A549 (cell line): ENCODE measurements at regions of chr9 and their contacts with region 1.

Region 1: GRCh38 chr9:130682490-130683121 is 11.0 kb upstream of the EXOSC2 start:
- DNase-seq: peak; percentile 89 to 91
- ATAC-seq: peak; percentile 71 to 87
- H3K4me3 ChIP-seq: peak overlapping the region; percentile 85
- H3K27ac ChIP-seq: peak overlapping the region; percentile 92; a peak in 5 of 6 replicates
- H3K4me1 ChIP-seq: peaks cover 6% of the 10 kb centered on the region; the same call in 2 of the 3 replicates
- CTCF ChIP-seq: peak; percentile 93
- EP300 ChIP-seq: no peak
- POLR2A ChIP-seq: no peak
- RAD21 ChIP-seq: peak; percentile 94 to 96

Region 2: GRCh38 chr9:130444565-130445221 is 237.9 kb before region 1 on chr9 and contains the start of gene ASS1:
- CTCF ChIA-PET with region 1: interaction called, 25 read pairs
- POLR2A ChIA-PET with region 1: no interaction called
- DNase-seq: peak in 1 of 2 experiments; percentile 68
- ATAC-seq: peak; percentile 70 to 83
- H3K4me3 ChIP-seq: peak within 1 kb of the TSS; percentile 77
- H3K27ac ChIP-seq: peak within 1 kb of the TSS; percentile 58 to 85; a peak in 5 of 6 replicates
- H3K4me1 ChIP-seq: peaks cover 31% of the 10 kb centered on the region
- CTCF ChIP-seq: no peak
- EP300 ChIP-seq: no peak
- POLR2A ChIP-seq: no peak
- RAD21 ChIP-seq: no peak
- polyA plus RNA-seq, gene ASS1: 32.5 and 36.9 TPM in 2 replicates

Region 3: GRCh38 chr9:130461218-130461630 is 221.4 kb before region 1 on chr9:
- CTCF ChIA-PET with region 1: interaction called, 453 read pairs
- POLR2A ChIA-PET with region 1: interaction called, 3 read pairs
- DNase-seq: peak; percentile 39 to 59
- ATAC-seq: peak; percentile 63 to 82
- H3K4me3 ChIP-seq: no peak overlapping the region
- H3K27ac ChIP-seq: no peak overlapping the region
- H3K4me1 ChIP-seq: no peaks in the 10 kb centered on the region
- CTCF ChIP-seq: peak; percentile 86
- EP300 ChIP-seq: no peak
- POLR2A ChIP-seq: no peak
- RAD21 ChIP-seq: peak; percentile 89 to 96

Region 4: DNA sequence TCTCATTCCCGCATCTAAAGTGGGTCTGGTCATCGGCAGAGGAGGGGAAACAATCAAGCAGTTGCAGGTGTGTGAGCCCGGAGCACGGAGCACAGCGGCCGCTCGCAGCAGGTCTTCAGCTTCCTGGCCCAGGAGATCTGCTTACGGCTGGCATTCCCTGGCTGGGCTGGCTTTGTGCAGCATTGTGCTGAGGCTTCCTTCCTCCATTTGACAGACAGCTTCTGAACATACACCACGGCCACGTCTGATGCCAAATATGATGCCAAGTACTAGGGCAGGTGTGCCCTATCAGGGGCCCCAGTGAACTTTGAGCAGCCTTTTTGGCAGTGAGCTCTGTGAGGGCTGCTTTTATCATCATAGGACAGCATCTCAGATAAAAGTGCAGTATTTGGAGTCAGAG is 66.2 kb before region 1 on chr9:
- CTCF ChIA-PET with region 1: interaction called, 11 read pairs
- POLR2A ChIA-PET with region 1: no interaction called
- DNase-seq: no peak
- ATAC-seq: no peak
- H3K4me3 ChIP-seq: no peak overlapping the region
- H3K27ac ChIP-seq: no peak overlapping the region
- H3K4me1 ChIP-seq: no peaks in the 10 kb centered on the region
- CTCF ChIP-seq: no peak
- EP300 ChIP-seq: no peak
- POLR2A ChIP-seq: no peak
- RAD21 ChIP-seq: no peak

Region 5: DNA sequence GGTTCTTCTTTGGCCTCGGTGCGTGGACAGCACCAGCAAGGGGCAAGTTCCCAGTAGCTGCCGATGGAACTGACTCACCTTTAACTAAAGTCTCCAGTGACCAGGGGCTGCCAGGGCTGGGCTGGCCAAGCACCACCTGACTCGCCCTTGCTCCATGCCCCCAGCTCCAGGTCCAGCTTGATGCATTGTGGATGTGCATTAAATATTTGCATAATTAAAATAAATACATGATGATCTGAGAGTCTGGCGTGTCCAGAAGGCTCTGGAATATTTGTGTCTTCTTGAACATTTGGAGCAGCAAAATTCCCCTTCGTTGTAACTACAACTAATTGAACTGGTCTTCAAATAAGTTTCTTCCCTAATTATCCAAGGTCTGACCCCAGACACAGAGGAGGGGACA is 27.7 kb before region 1 on chr9:
- CTCF ChIA-PET with region 1: interaction called, 18 read pairs
- POLR2A ChIA-PET with region 1: no interaction called
- DNase-seq: no peak
- ATAC-seq: no peak
- H3K4me3 ChIP-seq: no peak overlapping the region
- H3K27ac ChIP-seq: no peak overlapping the region
- H3K4me1 ChIP-seq: peaks cover 2% of the 10 kb centered on the region; the same call in 2 of the 3 replicates
- CTCF ChIP-seq: no peak
- EP300 ChIP-seq: no peak
- POLR2A ChIP-seq: no peak
- RAD21 ChIP-seq: no peak

Region 6: DNA sequence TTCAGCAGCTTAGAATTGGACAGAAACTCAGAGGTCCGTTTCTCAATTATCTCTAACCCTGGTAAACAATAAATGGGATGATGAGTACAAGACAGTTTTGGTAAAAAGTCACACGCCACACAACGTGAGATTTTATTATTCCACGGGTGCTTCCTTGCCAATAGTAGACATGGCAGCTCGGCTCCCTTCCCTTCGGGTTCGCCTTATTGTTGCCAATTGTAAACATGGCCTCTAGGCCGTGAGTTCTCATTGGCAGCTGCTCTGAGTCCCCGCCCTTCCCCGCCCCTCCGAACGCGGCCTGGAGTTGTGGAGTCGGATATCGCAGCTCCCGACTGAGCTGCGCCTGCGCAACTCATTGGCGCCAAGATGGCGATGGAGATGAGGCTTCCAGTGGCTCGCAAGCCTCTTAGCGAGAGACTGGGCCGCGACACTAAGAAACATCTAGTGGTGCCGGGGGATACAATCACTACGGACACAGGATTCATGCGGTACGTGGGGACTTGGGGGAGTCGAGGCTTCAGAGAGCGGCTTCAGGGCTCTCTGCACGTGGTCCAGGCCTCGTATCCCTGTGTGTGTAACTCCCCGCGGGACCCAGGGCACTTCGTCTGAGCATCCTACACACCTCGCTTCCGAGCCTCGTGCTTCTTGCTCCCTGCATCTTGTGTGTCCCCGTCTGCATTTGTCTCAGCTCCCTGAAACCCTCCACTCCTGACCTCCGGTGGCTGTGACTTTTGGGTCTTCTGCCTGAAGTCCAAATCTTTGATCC is 11.0 kb after region 1 on chr9 and contains the start of gene EXOSC2:
- CTCF ChIA-PET with region 1: interaction called, 23 read pairs
- POLR2A ChIA-PET with region 1: interaction called, 7 read pairs
- DNase-seq: peak; percentile 97 to 99
- ATAC-seq: peak; percentile 89 to 93
- H3K4me3 ChIP-seq: peak within 1 kb of the TSS; percentile 87
- H3K27ac ChIP-seq: peak within 1 kb of the TSS; percentile 80 to 88
- H3K4me1 ChIP-seq: peaks cover 15% of the 10 kb centered on the region; the same call in 2 of the 3 replicates
- CTCF ChIP-seq: no peak
- EP300 ChIP-seq: no peak
- POLR2A ChIP-seq: peak; percentile 95
- RAD21 ChIP-seq: no peak
- polyA plus RNA-seq, gene EXOSC2: 76.1 and 96.8 TPM in 2 replicates